ENCODE measurements at regions of chr11 and their contacts with region 1.

Region 1: DNA sequence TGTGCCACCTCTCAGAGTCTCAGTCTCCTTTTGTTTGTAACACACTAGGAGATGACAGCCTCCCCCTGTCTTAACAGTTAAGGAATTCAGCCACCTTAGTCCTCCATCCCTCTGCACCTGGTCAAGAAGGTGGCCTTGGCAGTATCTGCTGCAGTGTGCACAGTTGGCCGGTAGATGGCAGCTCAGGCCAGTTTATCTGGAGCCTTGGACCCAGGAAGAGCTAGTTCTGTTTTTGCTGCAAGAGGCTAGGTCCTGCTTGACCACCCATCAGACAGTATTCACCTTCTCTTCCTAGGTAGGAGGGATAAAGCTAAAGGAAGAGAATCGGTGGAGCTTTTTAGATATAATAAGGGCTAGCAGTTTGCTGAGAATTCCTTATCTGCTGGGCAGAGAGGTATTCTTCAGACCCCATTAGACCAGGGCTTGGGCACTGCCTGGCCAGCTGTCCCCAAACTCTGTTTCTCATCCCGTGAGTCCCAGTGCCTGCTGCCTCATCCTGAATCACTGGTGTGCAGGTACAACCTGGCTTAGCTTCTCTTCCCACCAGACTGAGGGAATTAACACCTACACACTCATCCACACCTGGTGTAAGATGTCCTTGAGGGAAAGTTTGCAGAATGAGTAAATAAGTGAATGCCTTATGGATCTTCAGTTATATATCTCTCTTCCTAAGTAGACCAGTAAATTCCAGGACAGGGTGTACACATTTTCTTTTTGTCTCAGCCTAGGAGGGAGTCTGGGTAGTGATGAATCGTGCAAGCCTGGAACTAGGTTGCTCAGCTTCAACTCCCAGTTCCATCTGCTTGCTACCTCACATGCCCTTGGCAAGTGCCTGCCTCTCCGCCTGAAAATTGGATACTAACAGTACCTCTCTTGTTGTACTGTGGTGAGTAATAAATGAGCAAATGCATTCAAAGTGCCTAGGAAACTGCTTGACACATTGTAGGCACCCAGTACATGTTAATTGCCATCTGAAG is 70.8 kb upstream of the NARS2 start:
- DNase-seq: peak; percentile 56 to 91 (median 73)
- H3K4me3 ChIP-seq: no peak overlapping the region
- H3K27ac ChIP-seq: no peak overlapping the region
- H3K4me1 ChIP-seq: no peaks in the 10 kb centered on the region
- H3K27me3 ChIP-seq: no peaks in the 10 kb centered on the region
- CTCF ChIP-seq: peak; percentile 90 to 97 (median 94)
- POLR2A ChIP-seq: no peak

Region 2: DNA sequence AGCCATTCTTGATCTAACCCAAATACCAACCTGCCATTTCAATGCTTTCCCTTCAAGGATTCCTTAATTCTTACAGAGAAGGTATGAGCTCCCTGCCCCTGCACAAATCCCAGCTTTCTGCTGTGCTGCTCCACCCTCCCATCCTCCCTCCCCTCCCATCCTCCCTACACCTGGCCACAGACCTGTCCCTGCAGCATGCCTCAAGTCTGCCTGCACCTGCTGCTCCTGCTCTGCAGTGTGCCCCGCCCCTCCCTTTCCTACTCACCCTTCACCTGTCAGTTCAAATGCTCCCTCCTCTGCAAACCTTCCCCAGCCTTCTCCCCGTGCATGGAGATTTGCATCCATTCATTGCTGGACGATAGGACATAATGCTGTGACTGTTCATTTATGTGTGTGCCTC is 69.0 kb after region 1 on chr11:
- intact Hi-C with region 1: loop called in 1 of 2 experiments (anchors 5 kb)
- DNase-seq: no peak
- H3K4me3 ChIP-seq: no peak overlapping the region
- H3K27ac ChIP-seq: no peak overlapping the region
- H3K4me1 ChIP-seq: no peaks in the 10 kb centered on the region
- H3K27me3 ChIP-seq: no peaks in the 10 kb centered on the region
- CTCF ChIP-seq: no peak
- POLR2A ChIP-seq: no peak

Region 3: GRCh38 chr11:79076526-79077115 is 431.1 kb after region 1 on chr11:
- intact Hi-C with region 1: loop called (anchors 5 to 10 kb)
- DNase-seq: peak in 6 of 7 donors; percentile 31 to 77 (median 56)
- H3K4me3 ChIP-seq: no peak overlapping the region
- H3K27ac ChIP-seq: no peak overlapping the region
- H3K4me1 ChIP-seq: no peaks in the 10 kb centered on the region
- H3K27me3 ChIP-seq: no peaks in the 10 kb centered on the region
- CTCF ChIP-seq: peak; percentile 30 to 67 (median 59)
- POLR2A ChIP-seq: no peak